ENCODE measurements at regions of chr10 and their contacts with region 1.

Region 1: DNA sequence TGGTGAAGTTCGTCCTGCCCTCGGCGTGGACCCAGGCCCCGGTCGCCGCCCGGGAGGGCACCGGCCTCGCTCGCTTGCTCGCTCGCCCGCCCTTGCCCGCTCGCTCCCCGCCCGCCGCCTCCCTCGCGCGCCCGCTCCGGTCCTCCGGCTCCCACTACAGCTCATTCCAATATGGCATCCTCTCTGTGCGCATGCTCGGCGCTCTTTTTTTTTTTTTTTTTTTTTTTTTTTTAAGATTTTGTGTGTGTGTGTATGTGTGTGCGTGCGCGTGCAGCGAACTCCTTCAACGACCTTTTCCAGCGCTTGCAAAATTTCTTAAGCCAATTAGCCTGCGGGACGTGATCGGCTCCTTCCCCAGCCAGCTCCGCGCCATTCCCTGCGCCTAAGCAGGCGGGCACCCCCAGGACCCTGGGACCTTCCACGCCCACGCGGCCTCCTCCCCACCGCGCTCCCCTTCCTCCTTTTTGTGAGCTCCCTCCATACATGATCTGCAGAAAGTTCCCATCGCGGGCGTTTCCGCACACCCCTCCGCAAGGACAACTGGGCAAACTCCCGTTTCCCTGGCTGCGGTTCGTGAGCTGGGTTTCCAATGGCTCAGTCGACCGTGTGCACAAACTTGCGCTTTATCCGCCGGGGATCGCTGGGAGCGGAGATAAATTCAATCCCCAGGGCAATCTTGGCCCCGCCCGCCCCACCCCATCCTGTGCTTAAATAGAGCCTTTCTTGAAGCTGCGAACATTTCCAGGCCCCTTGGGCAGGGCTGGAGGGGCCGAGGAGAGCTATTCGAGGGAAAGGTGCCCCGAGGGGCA is at the start of gene SFMBT2:
- DNase-seq: peak; percentile 76
- ATAC-seq: peak; percentile 55
- H3K4me3 Mint-ChIP-seq: peak within 1 kb of the TSS; percentile 98
- H3K27ac Mint-ChIP-seq: peak within 1 kb of the TSS; percentile 98
- H3K4me1 Mint-ChIP-seq: peaks cover 48% of the 10 kb centered on the region
- H3K27me3 Mint-ChIP-seq: peaks cover 16% of the 10 kb centered on the region
- total RNA-seq, gene SFMBT2: 63.1 to 63.2 TPM

Region 2: GRCh38 chr10:6929148-6929830 is 481.8 kb before region 1 on chr10:
- CTCF ChIA-PET with region 1: interaction called, 6 read pairs
- POLR2A ChIA-PET with region 1: interaction called, 11 read pairs
- DNase-seq: no peak
- ATAC-seq: no peak
- H3K4me3 Mint-ChIP-seq: no peak overlapping the region
- H3K27ac Mint-ChIP-seq: peak overlapping the region; percentile 96
- H3K4me1 Mint-ChIP-seq: peaks cover 57% of the 10 kb centered on the region
- H3K27me3 Mint-ChIP-seq: peaks cover 2% of the 10 kb centered on the region

Region 3: GRCh38 chr10:7121154-7121810 is 289.8 kb before region 1 on chr10:
- CTCF ChIA-PET with region 1: interaction called, 16 read pairs
- POLR2A ChIA-PET with region 1: no interaction called
- DNase-seq: peak; percentile 83
- ATAC-seq: peak; percentile 91
- H3K4me3 Mint-ChIP-seq: no peak overlapping the region
- H3K27ac Mint-ChIP-seq: no peak overlapping the region
- H3K4me1 Mint-ChIP-seq: peaks cover 5% of the 10 kb centered on the region
- H3K27me3 Mint-ChIP-seq: peaks cover 40% of the 10 kb centered on the region

Region 4: DNA sequence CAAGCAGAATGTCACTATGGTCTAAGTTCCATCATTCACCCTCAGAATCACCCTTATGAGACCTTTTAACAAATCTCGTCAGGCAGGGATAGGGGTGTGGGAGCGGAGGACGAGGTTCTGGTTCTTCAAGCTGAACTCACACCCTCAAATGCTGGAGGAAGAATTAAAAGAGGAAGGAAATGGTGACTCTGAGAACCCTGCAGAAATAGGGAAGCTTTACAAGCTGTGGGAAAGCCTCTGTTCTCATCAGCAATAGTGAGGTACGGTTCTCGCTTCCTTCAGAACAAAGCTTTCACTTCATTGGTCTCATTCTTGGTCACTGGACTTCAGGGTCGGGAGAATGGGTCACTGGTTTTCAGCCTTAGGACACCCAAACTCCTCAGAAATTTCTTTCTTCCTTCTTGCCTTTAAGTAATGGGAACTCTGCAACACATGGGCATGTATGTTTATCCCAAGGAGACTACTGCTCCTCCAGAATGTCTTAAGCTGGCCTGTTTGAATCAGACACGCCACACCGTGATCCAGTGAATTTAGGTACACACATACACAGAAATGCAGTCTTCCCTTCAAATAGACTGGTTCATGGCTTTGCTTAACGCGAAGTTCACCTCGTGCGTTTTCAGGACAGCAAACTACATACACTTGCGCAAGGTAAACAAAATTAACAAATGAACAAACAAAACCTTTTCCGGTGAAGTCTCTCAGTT is 226.3 kb before region 1 on chr10:
- CTCF ChIA-PET with region 1: no interaction called
- POLR2A ChIA-PET with region 1: no interaction called
- DNase-seq: no peak
- ATAC-seq: no peak
- H3K4me3 Mint-ChIP-seq: no peak overlapping the region
- H3K27ac Mint-ChIP-seq: peak overlapping the region; percentile 13
- H3K4me1 Mint-ChIP-seq: peaks cover 29% of the 10 kb centered on the region
- H3K27me3 Mint-ChIP-seq: no peaks in the 10 kb centered on the region

Region 5: DNA sequence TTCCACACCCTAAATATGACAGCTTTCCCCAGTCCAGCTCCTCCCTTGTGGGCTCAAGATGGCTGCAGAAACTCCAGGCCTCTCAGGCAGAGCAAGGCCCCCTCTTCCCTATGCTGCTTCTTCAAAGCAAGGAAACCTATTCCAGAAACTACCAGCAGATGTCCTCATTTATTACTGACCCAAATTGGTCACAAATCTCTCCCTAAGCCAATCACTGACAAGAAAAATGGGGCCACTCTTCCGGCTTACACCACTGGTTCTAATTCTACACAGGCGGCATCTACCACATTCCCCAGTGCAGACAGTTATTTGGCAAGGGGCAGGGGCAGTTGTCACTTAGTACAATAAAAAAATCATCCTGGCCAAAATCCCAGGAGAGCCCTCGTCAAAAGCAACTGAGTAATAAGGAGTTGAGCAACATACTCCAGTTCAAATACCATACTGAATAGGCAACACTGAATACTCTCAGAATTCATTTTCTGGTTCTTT is 150.6 kb before region 1 on chr10:
- CTCF ChIA-PET with region 1: interaction called, 20 read pairs
- POLR2A ChIA-PET with region 1: interaction called, 6 read pairs
- DNase-seq: peak; percentile 40
- ATAC-seq: no peak
- H3K4me3 Mint-ChIP-seq: no peak overlapping the region
- H3K27ac Mint-ChIP-seq: peak overlapping the region; percentile 80
- H3K4me1 Mint-ChIP-seq: peaks cover 62% of the 10 kb centered on the region
- H3K27me3 Mint-ChIP-seq: no peaks in the 10 kb centered on the region

Region 6: GRCh38 chr10:7373039-7373438 is 38.0 kb before region 1 on chr10:
- CTCF ChIA-PET with region 1: no interaction called
- POLR2A ChIA-PET with region 1: no interaction called
- DNase-seq: no peak
- ATAC-seq: no peak
- H3K4me3 Mint-ChIP-seq: no peak overlapping the region
- H3K27ac Mint-ChIP-seq: no peak overlapping the region
- H3K4me1 Mint-ChIP-seq: peaks cover 8% of the 10 kb centered on the region
- H3K27me3 Mint-ChIP-seq: no peaks in the 10 kb centered on the region

Region 7: GRCh38 chr10:7388602-7389001 is 22.5 kb before region 1 on chr10:
- CTCF ChIA-PET with region 1: interaction called, 13 read pairs
- POLR2A ChIA-PET with region 1: no interaction called
- DNase-seq: peak; percentile 67
- ATAC-seq: peak; percentile 91
- H3K4me3 Mint-ChIP-seq: peak overlapping the region; percentile 57
- H3K27ac Mint-ChIP-seq: peak overlapping the region; percentile 93
- H3K4me1 Mint-ChIP-seq: peaks cover 63% of the 10 kb centered on the region
- H3K27me3 Mint-ChIP-seq: no peaks in the 10 kb centered on the region

Region 8: GRCh38 chr10:7432884-7433726 is 22.0 kb after region 1 on chr10:
- CTCF ChIA-PET with region 1: no interaction called
- POLR2A ChIA-PET with region 1: no interaction called
- DNase-seq: no peak
- ATAC-seq: no peak
- H3K4me3 Mint-ChIP-seq: no peak overlapping the region
- H3K27ac Mint-ChIP-seq: no peak overlapping the region
- H3K4me1 Mint-ChIP-seq: peaks cover 16% of the 10 kb centered on the region
- H3K27me3 Mint-ChIP-seq: peaks cover 6% of the 10 kb centered on the region

Region 9: DNA sequence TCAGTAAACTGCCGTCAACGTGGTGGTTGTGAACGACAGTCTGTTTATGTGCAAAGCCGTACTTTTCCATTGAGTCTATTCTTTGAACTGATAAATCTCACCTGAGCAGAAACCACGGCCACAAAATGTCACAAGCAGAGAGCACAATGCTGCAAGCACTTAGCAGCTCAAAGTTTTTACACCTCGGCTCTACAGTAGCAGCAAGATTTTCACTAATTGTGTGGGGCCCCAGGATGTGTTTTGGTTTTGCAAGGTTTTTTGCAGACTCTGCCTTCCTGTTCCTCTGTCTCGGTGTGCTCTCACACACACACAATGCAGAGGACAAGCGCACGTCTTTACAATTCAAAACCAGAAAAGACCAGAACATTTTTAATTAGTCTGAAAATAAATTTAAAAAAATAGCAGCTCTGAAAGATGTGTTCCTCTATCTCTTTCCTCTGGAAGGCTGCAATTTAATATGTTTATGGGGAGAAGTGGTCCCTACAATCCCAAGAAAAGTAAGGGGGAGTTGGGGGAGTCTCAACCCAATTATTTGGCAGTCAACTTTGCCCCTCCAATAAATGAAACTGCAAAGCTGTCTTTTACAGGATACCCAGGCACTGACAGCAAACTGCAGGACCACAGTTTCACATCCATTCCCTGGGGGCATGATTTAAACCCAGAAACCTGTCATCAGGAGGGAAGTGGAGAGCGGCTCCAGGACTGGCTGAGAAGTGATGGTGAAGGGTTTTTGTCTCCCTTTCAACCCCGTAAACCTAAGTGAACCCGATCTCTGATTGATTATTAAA is 73.6 kb after region 1 on chr10:
- CTCF ChIA-PET with region 1: interaction called, 3 read pairs
- POLR2A ChIA-PET with region 1: interaction called, 11 read pairs
- DNase-seq: peak; percentile 91
- ATAC-seq: peak; percentile 92
- H3K4me3 Mint-ChIP-seq: peak overlapping the region; percentile 65
- H3K27ac Mint-ChIP-seq: peak overlapping the region; percentile 97
- H3K4me1 Mint-ChIP-seq: peaks cover 93% of the 10 kb centered on the region
- H3K27me3 Mint-ChIP-seq: no peaks in the 10 kb centered on the region

Region 10: GRCh38 chr10:7687228-7687907 is 276.3 kb after region 1 on chr10:
- CTCF ChIA-PET with region 1: interaction called, 10 read pairs
- POLR2A ChIA-PET with region 1: no interaction called
- DNase-seq: peak; percentile 91
- ATAC-seq: peak; percentile 98
- H3K4me3 Mint-ChIP-seq: no peak overlapping the region
- H3K27ac Mint-ChIP-seq: no peak overlapping the region
- H3K4me1 Mint-ChIP-seq: peaks cover 5% of the 10 kb centered on the region
- H3K27me3 Mint-ChIP-seq: peaks cover 23% of the 10 kb centered on the region